Calu3 (cell line): ENCODE measurements at regions of chr7 and their contacts with region 1.

Region 1: DNA sequence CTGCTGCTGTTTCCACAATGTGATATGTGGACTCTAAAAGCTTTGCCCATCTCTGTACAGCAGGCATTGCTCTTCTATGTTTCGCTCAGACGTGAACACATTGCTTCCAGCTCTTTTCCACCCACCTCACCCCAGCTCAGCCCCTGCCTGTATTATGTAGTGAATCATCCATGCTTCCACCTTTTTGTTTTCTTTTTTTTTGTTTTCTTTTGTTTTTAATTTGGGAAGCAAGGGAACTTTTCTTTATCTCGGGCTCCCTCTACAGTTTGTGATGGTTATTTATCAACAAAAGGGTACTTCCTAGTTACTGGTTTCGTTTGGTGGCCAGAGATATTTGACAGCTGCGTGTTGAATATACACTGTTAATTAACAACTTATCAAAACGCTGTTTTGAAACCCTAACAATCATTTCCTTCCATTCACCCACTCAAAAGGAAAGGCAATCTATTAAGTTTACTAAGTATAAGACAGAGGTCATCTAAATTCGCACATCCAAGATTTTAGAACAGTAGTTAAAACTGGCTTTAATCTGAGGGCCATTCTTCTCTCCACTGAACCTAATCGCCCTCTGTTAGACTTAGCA is 127.9 kb upstream of the STK17A start:
- DNase-seq: peak; percentile 25
- H3K4me3 Mint-ChIP-seq: no peak overlapping the region
- H3K27ac Mint-ChIP-seq: no peak overlapping the region
- H3K4me1 Mint-ChIP-seq: peaks cover 10% of the 10 kb centered on the region
- H3K27me3 Mint-ChIP-seq: no peaks in the 10 kb centered on the region
- CTCF ChIP-seq: peak; percentile 66

Region 2: DNA sequence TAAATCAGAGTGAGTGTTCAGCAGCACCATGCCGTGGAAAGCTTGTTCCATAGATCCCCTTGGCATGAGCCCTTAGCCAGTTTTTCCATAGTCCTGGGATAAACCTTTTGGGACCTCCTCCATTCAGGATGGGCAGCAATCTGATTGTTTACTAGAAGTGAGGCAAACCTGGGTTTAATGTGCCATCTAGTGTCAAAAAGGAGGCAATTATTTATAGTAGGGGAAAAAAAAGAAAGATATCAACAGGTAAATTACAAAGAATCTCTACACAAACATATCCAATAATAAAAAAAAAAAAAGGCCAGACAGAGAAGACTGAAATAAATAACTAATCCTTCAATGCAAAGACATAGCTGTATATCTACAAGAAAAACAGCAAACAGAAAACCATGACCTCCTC is 101.1 kb before region 1 on chr7:
- CTCF ChIA-PET with region 1: no interaction called
- intact Hi-C with region 1: no loop called
- DNase-seq: no peak
- H3K4me3 Mint-ChIP-seq: no peak overlapping the region
- H3K27ac Mint-ChIP-seq: no peak overlapping the region
- H3K4me1 Mint-ChIP-seq: no peaks in the 10 kb centered on the region
- H3K27me3 Mint-ChIP-seq: peaks cover 25% of the 10 kb centered on the region
- CTCF ChIP-seq: no peak

Region 3: GRCh38 chr7:43484678-43485395 is 29.8 kb after region 1 on chr7:
- CTCF ChIA-PET with region 1: no interaction called
- intact Hi-C with region 1: loop called (anchors 2 kb)
- DNase-seq: no peak
- H3K4me3 Mint-ChIP-seq: no peak overlapping the region
- H3K27ac Mint-ChIP-seq: peak overlapping the region; percentile 6
- H3K4me1 Mint-ChIP-seq: peaks cover 87% of the 10 kb centered on the region
- H3K27me3 Mint-ChIP-seq: no peaks in the 10 kb centered on the region
- CTCF ChIP-seq: no peak

Region 4: GRCh38 chr7:43533801-43534479 is 78.9 kb after region 1 on chr7:
- CTCF ChIA-PET with region 1: no interaction called
- intact Hi-C with region 1: no loop called
- DNase-seq: no peak
- H3K4me3 Mint-ChIP-seq: no peak overlapping the region
- H3K27ac Mint-ChIP-seq: no peak overlapping the region
- H3K4me1 Mint-ChIP-seq: peaks cover 8% of the 10 kb centered on the region
- H3K27me3 Mint-ChIP-seq: no peaks in the 10 kb centered on the region
- CTCF ChIP-seq: no peak

Region 5: GRCh38 chr7:43834463-43835251 is 379.6 kb after region 1 on chr7:
- CTCF ChIA-PET with region 1: no interaction called
- intact Hi-C with region 1: loop called (anchors 10 kb)
- DNase-seq: no peak
- H3K4me3 Mint-ChIP-seq: peak overlapping the region; percentile 15
- H3K27ac Mint-ChIP-seq: peak overlapping the region; percentile 40
- H3K4me1 Mint-ChIP-seq: peaks cover 27% of the 10 kb centered on the region
- H3K27me3 Mint-ChIP-seq: no peaks in the 10 kb centered on the region
- CTCF ChIP-seq: no peak